ENCODE measurements at regions of chr19 and their contacts with region 1.

Region 1: DNA sequence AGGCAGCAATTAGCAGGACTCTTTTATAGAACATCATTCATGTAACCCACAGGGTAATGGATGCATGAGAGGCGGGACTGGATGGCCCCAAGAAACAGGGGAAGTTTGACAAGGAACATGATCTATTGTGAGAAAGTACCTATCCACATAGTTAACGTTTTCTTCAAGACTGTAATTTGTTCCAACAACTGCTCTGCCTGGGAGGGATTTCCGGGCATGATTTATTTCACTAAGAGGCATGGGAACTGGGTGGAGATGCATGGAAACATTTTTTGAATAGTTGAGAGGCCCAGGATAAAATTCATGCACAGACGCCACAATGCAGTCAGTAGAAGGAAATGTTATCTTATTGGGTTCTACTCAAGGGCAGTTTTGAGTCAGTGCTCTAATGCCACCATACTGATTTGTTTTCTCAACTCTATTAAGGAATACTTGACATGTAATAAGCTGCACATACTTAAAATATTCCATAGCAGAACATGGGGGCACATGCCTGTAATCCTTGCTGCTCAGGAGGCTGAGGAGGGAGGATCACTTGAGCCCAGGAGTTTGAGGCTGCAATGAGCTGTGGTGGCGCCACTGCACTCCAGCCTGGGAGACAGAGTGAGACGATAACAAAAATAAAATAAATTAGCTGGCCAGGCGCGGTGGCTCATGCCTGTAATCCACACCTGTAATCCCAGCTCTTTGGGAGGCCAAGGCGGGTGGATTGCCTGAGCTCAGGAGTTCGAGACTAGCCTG is 9.9 kb upstream of the ATG4D start:
- DNase-seq: peak; percentile 83
- H3K4me3 ChIP-seq: no peak overlapping the region
- H3K27ac ChIP-seq: no peak overlapping the region
- H3K4me1 ChIP-seq: peaks cover 17% of the 10 kb centered on the region
- H3K27me3 ChIP-seq: no peaks in the 10 kb centered on the region
- CTCF ChIP-seq: no peak

Region 2: DNA sequence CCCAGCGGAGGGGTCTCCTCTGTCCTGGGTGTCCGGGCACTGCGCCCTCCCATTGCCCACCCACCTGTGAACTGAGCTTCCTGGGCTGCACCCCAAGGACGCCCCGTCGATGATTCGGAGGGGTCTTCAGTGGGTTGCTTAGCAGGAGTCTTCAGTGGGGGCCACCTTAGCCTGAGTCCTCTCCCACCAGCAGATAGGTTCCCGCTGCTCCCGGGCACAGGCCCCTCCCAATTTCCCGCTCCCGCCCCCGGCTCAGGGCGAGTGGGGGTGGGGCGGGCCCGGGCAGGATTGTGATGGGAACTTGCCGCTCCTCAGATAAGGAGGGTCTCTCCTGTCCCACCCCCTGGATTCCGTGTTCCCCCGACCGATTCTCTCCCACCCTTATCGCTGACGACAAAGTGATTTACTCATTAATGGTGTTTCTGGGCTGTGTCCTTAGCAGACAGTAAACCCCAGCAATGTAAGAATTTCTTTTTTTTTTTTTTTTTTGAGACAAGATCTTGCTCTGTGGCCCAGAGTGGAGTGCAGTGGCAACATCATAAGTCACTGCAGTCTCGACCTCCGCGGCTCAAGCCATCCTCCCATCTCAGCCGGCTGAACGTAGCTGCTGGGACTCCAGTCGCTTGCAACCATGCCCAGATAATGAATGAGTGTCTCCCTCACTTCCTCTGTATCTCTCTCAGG is 15.9 kb before region 1 on chr19:
- CTCF ChIA-PET with region 1: no interaction called
- dilution Hi-C with region 1: no loop called
- in situ Hi-C with region 1: no loop called
- intact Hi-C with region 1: loop called (anchors 1 kb)
- DNase-seq: no peak
- H3K4me3 ChIP-seq: peak overlapping the region; percentile 65 to 69 (median 66)
- H3K27ac ChIP-seq: no peak overlapping the region
- H3K4me1 ChIP-seq: peaks cover 24% of the 10 kb centered on the region
- H3K27me3 ChIP-seq: no peaks in the 10 kb centered on the region
- CTCF ChIP-seq: no peak

Region 3: DNA sequence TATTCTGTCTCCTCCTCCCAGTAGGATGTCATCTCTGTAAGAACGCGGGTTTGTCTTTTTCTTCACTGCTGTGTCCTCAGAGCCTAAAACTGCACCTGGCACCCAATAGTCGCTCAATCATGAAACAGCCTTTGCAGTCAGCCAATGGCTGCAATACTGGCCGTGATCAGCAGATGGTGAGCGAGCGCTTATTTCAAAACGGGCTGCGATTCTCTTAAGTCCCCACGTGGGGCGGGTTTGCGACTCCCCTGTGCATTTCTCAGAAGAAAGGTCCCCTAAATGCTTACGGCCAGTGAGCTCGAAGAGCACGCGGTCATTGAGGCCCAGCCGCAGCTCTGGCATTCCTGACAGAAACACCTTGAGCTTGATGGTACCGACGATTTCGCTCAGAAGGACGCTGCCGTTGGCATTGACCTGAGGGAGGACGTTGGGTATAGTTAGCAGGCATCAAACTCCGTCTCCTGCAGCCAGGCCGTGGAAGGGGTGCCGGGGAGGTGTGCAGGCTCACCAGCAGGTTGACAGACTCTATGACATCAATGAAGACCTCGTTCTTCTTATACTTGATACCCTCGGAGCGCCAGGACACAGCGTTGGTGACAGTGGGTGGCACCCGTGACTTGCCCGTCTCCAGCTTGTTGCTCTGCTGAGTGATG is 47.3 kb after region 1 on chr19:
- CTCF ChIA-PET with region 1: no interaction called
- dilution Hi-C with region 1: no loop called
- in situ Hi-C with region 1: no loop called
- intact Hi-C with region 1: no loop called
- DNase-seq: peak; percentile 73
- H3K4me3 ChIP-seq: no peak overlapping the region
- H3K27ac ChIP-seq: no peak overlapping the region
- H3K4me1 ChIP-seq: no peaks in the 10 kb centered on the region
- H3K27me3 ChIP-seq: no peaks in the 10 kb centered on the region
- CTCF ChIP-seq: peak; percentile 98 to 99

Region 4: GRCh38 chr19:10653715-10654492 is 120.1 kb after region 1 on chr19 and contains the start of gene ILF3:
- CTCF ChIA-PET with region 1: interaction called, 29 read pairs
- dilution Hi-C with region 1: no loop called
- in situ Hi-C with region 1: no loop called
- intact Hi-C with region 1: no loop called
- DNase-seq: peak; percentile 100
- H3K4me3 ChIP-seq: peak within 1 kb of the TSS; percentile 87 to 99 (median 98)
- H3K27ac ChIP-seq: peak within 1 kb of the TSS; percentile 97
- H3K4me1 ChIP-seq: peaks cover 8% of the 10 kb centered on the region
- H3K27me3 ChIP-seq: no peaks in the 10 kb centered on the region
- CTCF ChIP-seq: no peak
- total RNA-seq, gene ILF3: 75.5 to 252 TPM

Region 5: GRCh38 chr19:10828981-10829821 is 295.4 kb after region 1 on chr19:
- CTCF ChIA-PET with region 1: interaction called, 11 read pairs
- dilution Hi-C with region 1: no loop called
- in situ Hi-C with region 1: no loop called
- intact Hi-C with region 1: no loop called
- DNase-seq: no peak
- H3K4me3 ChIP-seq: no peak overlapping the region
- H3K27ac ChIP-seq: no peak overlapping the region
- H3K4me1 ChIP-seq: no peaks in the 10 kb centered on the region
- H3K27me3 ChIP-seq: no peaks in the 10 kb centered on the region
- CTCF ChIP-seq: no peak